ENCODE measurements at regions of chr11 and their contacts with region 1.

Region 1: DNA sequence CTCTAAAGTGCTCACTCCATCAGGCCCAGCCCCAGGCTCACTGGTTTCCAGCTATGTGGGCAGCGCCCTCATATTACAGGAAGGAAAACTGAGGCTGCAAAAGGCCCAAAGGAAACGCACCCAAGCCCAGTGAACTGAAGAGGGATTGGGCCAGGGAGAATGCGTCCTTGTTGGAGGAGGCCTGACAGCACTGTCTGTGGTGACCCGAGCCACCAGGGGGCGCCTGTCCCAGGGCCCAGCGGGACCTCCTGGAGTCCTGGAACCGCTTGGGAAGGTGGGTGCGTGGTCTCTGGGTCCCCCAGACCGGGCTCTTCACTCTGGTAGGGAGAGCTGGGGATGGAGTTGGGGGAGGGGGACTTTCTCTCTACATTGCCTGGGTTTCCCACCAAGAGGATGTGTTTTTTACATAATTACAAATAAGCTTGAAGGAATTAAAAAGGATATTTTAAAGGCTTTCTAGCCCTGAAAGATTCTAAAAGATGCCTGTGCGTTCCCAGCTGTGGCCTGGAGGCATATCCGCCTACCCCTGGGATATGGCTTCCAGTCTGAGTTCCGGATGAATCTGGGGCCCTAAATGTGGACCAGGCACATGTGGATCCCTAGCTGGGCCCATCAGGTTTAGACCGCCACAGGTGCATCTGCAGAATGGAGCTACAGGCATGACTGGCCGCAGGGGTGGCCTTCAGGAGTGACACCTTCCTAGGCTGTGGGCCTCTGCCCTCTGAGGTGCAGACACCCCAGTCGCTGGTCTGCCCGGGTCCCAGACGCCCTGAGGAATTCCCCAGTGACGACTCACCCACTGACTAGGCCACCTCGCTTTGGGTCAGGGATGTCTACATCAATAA is 4.2 kb downstream of the SPI1 start:
- DNase-seq: peak; percentile 63 to 97 (median 82)
- ATAC-seq: peak; percentile 81
- H3K4me3 ChIP-seq: peak overlapping the region in 1 of 2 donors; percentile 67
- H3K27ac ChIP-seq: peak overlapping the region in 1 of 2 donors; percentile 93
- H3K4me1 ChIP-seq: peaks cover 4 to 55% of the 10 kb centered on the region in 2 donors
- H3K27me3 ChIP-seq: no peaks in the 10 kb centered on the region
- CTCF ChIP-seq: peak; percentile 88 to 94

Region 2: GRCh38 chr11:47104261-47104950 is 269.7 kb before region 1 on chr11:
- intact Hi-C with region 1: no loop called
- DNase-seq: peak in 1 of 4 donors; percentile 51
- ATAC-seq: no peak
- H3K4me3 ChIP-seq: no peak overlapping the region
- H3K27ac ChIP-seq: no peak overlapping the region
- H3K4me1 ChIP-seq: no peaks in the 10 kb centered on the region
- H3K27me3 ChIP-seq: no peaks in the 10 kb centered on the region
- CTCF ChIP-seq: no peak

Region 3: GRCh38 chr11:47407746-47408590 is 33.9 kb after region 1 on chr11 and contains the start of gene SLC39A13:
- intact Hi-C with region 1: loop called in 1 of 2 experiments (anchors 5 kb)
- DNase-seq: peak; percentile 93 to 99 (median 96)
- ATAC-seq: peak; percentile 91
- H3K4me3 ChIP-seq: peak within 1 kb of the TSS; percentile 74 to 75
- H3K27ac ChIP-seq: peak within 1 kb of the TSS; percentile 91
- H3K4me1 ChIP-seq: peaks cover 8 to 52% of the 10 kb centered on the region in 2 donors
- H3K27me3 ChIP-seq: no peaks in the 10 kb centered on the region
- CTCF ChIP-seq: peak; percentile 66 to 93
- polyA plus RNA-seq, gene SLC39A13: 29.6 to 46.4 (median 34.1) TPM

Region 4: DNA sequence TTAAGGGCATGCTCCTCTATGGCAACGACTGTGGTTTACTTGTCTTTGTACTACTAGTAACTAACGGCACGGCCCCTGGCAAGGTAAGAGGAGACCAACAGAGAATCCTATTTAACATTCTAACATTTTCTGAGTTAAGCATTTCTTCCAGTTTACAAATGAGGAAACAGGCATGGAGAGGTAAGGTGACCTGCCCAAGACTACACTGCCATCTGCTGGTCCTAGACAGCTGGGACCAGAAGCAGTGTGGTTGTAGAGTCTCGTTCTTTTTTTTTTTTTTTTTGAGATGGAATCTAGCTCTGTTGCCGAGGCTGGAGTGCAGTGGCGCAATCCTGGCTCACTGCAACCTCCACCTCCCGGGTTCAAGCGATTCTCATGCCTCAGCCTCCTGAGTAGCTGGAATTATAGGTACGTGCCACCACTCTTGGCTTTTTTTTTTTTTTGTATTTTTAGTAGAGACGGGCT is 80.1 kb after region 1 on chr11:
- intact Hi-C with region 1: loop called in 1 of 2 experiments (anchors 10 kb)
- DNase-seq: peak in 3 of 4 donors; percentile 48 to 86 (median 75)
- ATAC-seq: peak; percentile 99
- H3K4me3 ChIP-seq: no peak overlapping the region
- H3K27ac ChIP-seq: no peak overlapping the region
- H3K4me1 ChIP-seq: no peaks in the 10 kb centered on the region
- H3K27me3 ChIP-seq: no peaks in the 10 kb centered on the region
- CTCF ChIP-seq: peak; percentile 60 to 68